Activated CD8-positive, alpha-beta memory T cell treated with anti-CD3 and anti-CD28 coated beads, Interleukin-2, amount 10 ng/mL, durations not matched to agents 7 days and 5 days (primary cell): ENCODE measurements at regions of chr13 and their contacts with region 1.

Region 1: DNA sequence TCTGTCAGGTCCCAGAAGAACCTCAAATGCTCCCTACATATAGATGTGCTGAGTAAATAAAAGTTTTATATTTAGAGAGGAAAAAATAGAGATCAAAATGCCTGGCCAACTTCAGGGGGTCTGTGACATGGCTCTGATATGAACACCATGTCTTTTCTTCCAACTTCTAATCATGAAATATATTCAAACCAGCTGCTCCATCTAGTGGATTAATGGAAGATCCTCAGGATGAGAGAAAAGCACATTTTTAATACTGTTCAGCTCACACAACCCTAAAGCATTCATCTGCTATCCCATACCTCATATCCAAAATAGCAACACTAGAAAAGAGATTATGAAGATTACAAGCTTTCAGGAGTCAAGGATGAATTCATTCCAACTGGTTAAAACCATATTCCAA is 56.0 kb upstream of the DOCK9 start:
- DNase-seq: no peak
- ATAC-seq: no peak
- H3K4me3 Mint-ChIP-seq: no peak overlapping the region
- H3K27ac Mint-ChIP-seq: no peak overlapping the region
- H3K4me1 Mint-ChIP-seq: peaks cover 14% of the 10 kb centered on the region
- H3K27me3 Mint-ChIP-seq: no peaks in the 10 kb centered on the region

Region 2: DNA sequence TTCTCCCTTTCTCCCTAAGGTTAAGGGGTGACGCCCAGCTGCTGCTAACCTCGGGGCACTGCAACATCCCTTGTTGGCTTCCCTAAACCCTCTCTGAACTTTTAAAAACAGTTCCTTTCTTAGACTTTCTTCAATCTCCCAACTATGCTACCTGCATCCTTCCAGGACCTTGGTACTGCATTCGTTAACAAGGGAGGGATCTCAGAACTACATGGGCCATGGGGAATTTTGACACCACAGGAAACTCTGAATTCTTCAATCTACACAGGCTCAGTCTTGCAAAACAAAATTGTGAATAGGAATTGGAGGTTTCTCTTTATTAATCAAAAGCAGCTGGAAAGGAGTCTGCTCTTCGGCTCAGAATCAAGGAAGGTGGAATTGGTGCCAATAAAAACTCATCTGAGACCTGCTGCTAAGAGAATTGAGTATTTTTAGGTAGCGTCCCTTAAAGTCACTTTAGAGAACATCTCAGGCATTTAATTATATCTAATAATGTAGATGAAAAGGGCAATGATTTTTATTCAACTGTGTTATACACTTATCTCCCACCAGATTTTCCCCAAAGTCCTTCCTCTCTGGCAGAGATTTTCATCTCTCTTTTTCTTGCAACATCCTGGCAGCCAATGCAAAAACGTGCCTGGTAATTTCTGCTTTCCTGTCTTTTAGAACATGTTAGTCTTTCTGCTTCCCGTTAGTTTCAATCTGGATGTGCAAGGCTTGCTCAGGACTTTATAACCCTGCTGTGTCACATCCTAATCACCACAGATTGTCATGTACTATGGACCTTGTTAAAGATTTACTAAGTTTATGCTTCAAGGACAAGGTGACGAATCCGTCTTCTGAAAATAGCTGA is 212.2 kb before region 1 on chr13:
- CTCF ChIA-PET with region 1: no interaction called
- DNase-seq: no peak
- ATAC-seq: no peak
- H3K4me3 Mint-ChIP-seq: no peak overlapping the region
- H3K27ac Mint-ChIP-seq: no peak overlapping the region
- H3K4me1 Mint-ChIP-seq: peaks cover 10% of the 10 kb centered on the region
- H3K27me3 Mint-ChIP-seq: no peaks in the 10 kb centered on the region

Region 3: DNA sequence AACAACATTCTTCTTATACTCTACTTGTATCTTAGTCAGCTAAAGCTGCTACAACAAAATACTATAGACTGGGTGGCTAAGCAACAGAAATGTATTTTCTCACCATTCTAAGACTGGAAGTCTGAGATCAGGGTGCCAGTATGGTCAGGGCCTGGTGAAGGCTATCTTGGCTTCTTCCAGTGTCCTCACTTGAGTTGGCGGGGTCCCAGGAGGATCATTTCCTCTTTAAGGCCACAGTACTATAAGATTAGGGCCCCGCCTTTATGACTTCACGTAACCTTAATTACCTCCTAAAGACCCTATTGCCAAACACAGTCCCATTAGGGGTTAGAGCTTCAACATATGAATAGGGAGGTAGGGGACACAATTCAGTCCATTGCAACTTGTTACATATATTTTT is 25.2 kb before region 1 on chr13:
- CTCF ChIA-PET with region 1: no interaction called
- DNase-seq: no peak
- ATAC-seq: no peak
- H3K4me3 Mint-ChIP-seq: no peak overlapping the region
- H3K27ac Mint-ChIP-seq: no peak overlapping the region
- H3K4me1 Mint-ChIP-seq: no peaks in the 10 kb centered on the region
- H3K27me3 Mint-ChIP-seq: no peaks in the 10 kb centered on the region

Region 4: DNA sequence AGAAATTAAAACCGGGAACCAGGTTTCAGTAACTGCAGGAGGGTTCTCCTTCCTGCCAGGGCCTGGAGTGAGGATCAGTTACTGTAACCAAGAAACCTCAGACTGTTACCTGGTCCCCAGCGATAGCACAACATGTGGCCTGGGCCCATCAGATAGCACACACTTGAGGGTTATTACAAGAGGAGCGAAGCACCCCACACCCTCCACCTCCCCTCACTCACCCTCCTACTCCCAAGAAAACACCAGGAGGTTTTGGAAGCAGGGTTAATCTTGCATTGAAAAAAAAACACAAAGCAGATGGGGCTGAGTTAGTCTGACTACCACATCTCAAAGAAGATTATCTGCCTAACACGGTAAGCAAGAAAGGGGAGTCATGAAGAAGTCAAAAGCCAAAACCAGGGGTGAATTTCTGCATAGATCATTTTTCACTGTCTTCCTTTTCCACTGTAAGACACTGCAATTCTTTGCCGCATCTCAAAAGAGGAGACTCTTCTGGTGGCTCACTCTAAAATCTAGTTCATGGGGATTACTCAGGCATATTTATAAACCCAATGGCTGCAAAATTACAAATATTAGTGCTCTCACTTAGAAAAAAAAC is 19.9 kb after region 1 on chr13:
- CTCF ChIA-PET with region 1: interaction called, 15 read pairs
- DNase-seq: peak; percentile 47
- ATAC-seq: peak; percentile 55
- H3K4me3 Mint-ChIP-seq: no peak overlapping the region
- H3K27ac Mint-ChIP-seq: peak overlapping the region; percentile 71
- H3K4me1 Mint-ChIP-seq: peaks cover 59% of the 10 kb centered on the region
- H3K27me3 Mint-ChIP-seq: no peaks in the 10 kb centered on the region

Region 5: GRCh38 chr13:99087096-99087953 is 53.5 kb after region 1 on chr13:
- CTCF ChIA-PET with region 1: interaction called, 15 read pairs
- DNase-seq: peak; percentile 95
- ATAC-seq: peak; percentile 88
- H3K4me3 Mint-ChIP-seq: peak overlapping the region; percentile 99
- H3K27ac Mint-ChIP-seq: peak overlapping the region; percentile 98
- H3K4me1 Mint-ChIP-seq: peaks cover 30% of the 10 kb centered on the region
- H3K27me3 Mint-ChIP-seq: no peaks in the 10 kb centered on the region